Panc1 (cell line): ENCODE measurements at regions of chr1 and their contacts with region 1.

Region 1: GRCh38 chr1:2194898-2195673 is 514 bp upstream of the FAAP20 start:
- DNase-seq: no peak
- ATAC-seq: peak; percentile 84
- H3K4me3 ChIP-seq: peak overlapping the region; percentile 63
- H3K27ac ChIP-seq: peak overlapping the region; percentile 91
- H3K4me1 ChIP-seq: peaks cover 44% of the 10 kb centered on the region
- H3K27me3 ChIP-seq: no peaks in the 10 kb centered on the region
- CTCF ChIP-seq: peak; percentile 97

Region 2: DNA sequence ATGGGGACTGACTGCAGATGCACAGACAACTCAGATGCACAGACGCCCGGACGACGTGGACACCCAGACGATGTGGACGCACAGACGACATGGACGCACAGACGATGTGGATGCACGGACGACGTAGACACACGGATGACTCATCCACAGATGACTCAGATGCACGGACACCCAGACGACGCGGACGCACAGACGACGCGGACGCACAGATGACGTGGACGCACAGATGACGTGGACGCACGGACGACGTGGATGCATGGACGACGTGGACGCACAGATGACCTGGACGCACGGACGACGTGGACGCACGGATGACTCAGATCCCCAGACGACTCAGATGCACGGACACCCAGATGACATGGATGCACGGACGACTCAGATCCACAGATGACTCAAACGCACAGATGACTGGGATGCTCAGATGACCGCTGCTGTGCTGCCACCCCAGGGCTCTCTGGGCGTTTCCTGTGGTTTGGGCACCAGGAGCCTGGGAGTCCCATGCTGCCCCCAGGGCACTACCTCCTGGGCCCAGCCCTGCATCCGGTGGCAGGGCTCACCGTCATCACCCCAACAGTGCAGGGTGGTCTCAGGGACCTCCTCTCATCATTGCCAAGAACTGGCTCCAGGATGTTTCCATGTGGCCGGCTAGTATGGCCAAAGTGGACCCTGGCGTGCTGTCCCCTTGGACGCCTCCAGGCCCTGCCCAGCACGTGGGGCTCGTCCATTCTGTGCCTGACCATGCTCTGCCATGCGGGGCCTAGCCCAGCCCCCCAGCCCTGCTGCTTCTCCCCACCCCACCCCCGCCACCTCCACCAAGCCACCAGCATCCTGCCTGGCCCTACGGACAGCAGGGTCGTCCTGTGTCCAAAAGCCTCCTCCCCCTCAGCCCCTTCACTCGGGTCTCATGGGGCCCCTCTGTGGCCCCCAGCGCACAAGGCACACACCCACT is 14.5 kb before region 1 on chr1:
- CTCF ChIA-PET with region 1: no interaction called
- POLR2A ChIA-PET with region 1: no interaction called
- in situ Hi-C with region 1: no loop called
- intact Hi-C with region 1: no loop called
- DNase-seq: no peak
- ATAC-seq: no peak
- H3K4me3 ChIP-seq: no peak overlapping the region
- H3K27ac ChIP-seq: no peak overlapping the region
- H3K4me1 ChIP-seq: no peaks in the 10 kb centered on the region
- H3K27me3 ChIP-seq: no peaks in the 10 kb centered on the region
- CTCF ChIP-seq: no peak

Region 3: GRCh38 chr1:2212542-2213491 is 17.7 kb after region 1 on chr1:
- CTCF ChIA-PET with region 1: interaction called, 11 read pairs
- POLR2A ChIA-PET with region 1: interaction called, 14 read pairs
- in situ Hi-C with region 1: no loop called
- intact Hi-C with region 1: no loop called
- DNase-seq: no peak
- ATAC-seq: peak; percentile 26
- H3K4me3 ChIP-seq: peak overlapping the region; percentile 7 to 29; a peak in 3 of 4 replicates
- H3K27ac ChIP-seq: peak overlapping the region; percentile 82
- H3K4me1 ChIP-seq: peaks cover 53% of the 10 kb centered on the region
- H3K27me3 ChIP-seq: no peaks in the 10 kb centered on the region
- CTCF ChIP-seq: no peak; the same call in 1 of the 2 replicates

Region 4: GRCh38 chr1:2227346-2228153 is 32.5 kb after region 1 on chr1:
- CTCF ChIA-PET with region 1: interaction called, 10 read pairs
- POLR2A ChIA-PET with region 1: interaction called, 3 read pairs
- in situ Hi-C with region 1: no loop called
- intact Hi-C with region 1: no loop called
- DNase-seq: no peak
- ATAC-seq: peak; percentile 86
- H3K4me3 ChIP-seq: peak overlapping the region; percentile 58 to 61
- H3K27ac ChIP-seq: peak overlapping the region; percentile 71
- H3K4me1 ChIP-seq: peaks cover 12% of the 10 kb centered on the region
- H3K27me3 ChIP-seq: no peaks in the 10 kb centered on the region
- CTCF ChIP-seq: no peak

Region 5: GRCh38 chr1:2255420-2256369 is 60.6 kb after region 1 on chr1:
- CTCF ChIA-PET with region 1: no interaction called
- POLR2A ChIA-PET with region 1: no interaction called
- in situ Hi-C with region 1: no loop called
- intact Hi-C with region 1: no loop called
- DNase-seq: peak; percentile 82
- ATAC-seq: peak; percentile 77
- H3K4me3 ChIP-seq: no peak overlapping the region
- H3K27ac ChIP-seq: peak overlapping the region; percentile 44
- H3K4me1 ChIP-seq: peaks cover 13% of the 10 kb centered on the region
- H3K27me3 ChIP-seq: no peaks in the 10 kb centered on the region
- CTCF ChIP-seq: no peak

Region 6: GRCh38 chr1:2314803-2315673 is 120.0 kb after region 1 on chr1:
- CTCF ChIA-PET with region 1: interaction called, 6 read pairs
- POLR2A ChIA-PET with region 1: interaction called, 3 read pairs
- in situ Hi-C with region 1: no loop called
- intact Hi-C with region 1: loop called (anchors 10 kb)
- DNase-seq: no peak
- ATAC-seq: peak; percentile 44
- H3K4me3 ChIP-seq: peak overlapping the region; percentile 42 to 50
- H3K27ac ChIP-seq: peak overlapping the region; percentile 73; the same call in 1 of the 2 replicates
- H3K4me1 ChIP-seq: peaks cover 61% of the 10 kb centered on the region
- H3K27me3 ChIP-seq: no peaks in the 10 kb centered on the region
- CTCF ChIP-seq: peak; percentile 97

Region 7: DNA sequence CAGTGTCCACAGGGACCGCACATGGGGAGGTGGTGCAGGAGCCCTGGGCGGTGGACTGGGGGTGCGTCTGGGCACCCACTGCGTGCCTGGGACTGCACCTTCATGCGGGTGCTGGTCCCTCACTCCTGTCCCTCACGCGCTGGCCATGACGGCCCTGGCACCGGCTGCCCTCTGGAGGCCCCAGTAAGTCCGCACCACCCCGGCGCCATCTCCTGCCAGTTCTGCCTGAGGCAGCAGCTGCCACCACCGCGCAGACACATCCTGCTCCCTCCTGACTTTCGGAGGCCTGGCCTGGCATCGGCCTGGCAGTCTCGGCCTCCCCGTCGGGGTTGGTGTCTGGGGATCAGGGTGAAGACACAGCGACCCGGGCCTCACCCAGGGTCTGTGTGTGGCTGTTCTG is 131.4 kb after region 1 on chr1:
- CTCF ChIA-PET with region 1: no interaction called
- POLR2A ChIA-PET with region 1: no interaction called
- in situ Hi-C with region 1: no loop called
- intact Hi-C with region 1: no loop called
- DNase-seq: no peak
- ATAC-seq: no peak
- H3K4me3 ChIP-seq: no peak overlapping the region
- H3K27ac ChIP-seq: no peak overlapping the region
- H3K4me1 ChIP-seq: no peaks in the 10 kb centered on the region
- H3K27me3 ChIP-seq: no peaks in the 10 kb centered on the region
- CTCF ChIP-seq: no peak

Region 8: GRCh38 chr1:2381741-2382620 is 186.9 kb after region 1 on chr1:
- CTCF ChIA-PET with region 1: interaction called, 38 read pairs
- POLR2A ChIA-PET with region 1: interaction called, 6 read pairs
- in situ Hi-C with region 1: no loop called
- intact Hi-C with region 1: loop called (anchors 2 kb)
- DNase-seq: peak; percentile 30
- ATAC-seq: peak; percentile 90
- H3K4me3 ChIP-seq: no peak overlapping the region
- H3K27ac ChIP-seq: no peak overlapping the region
- H3K4me1 ChIP-seq: peaks cover 5% of the 10 kb centered on the region; the same call in 1 of the 2 replicates
- H3K27me3 ChIP-seq: no peaks in the 10 kb centered on the region
- CTCF ChIP-seq: peak; percentile 96

Region 9: GRCh38 chr1:2391041-2391930 is 196.2 kb after region 1 on chr1 and contains the starts of genes MORN1 and RER1:
- CTCF ChIA-PET with region 1: interaction called, 6 read pairs
- POLR2A ChIA-PET with region 1: interaction called, 5 read pairs
- in situ Hi-C with region 1: loop called (anchors 10 kb)
- intact Hi-C with region 1: no loop called
- DNase-seq: peak; percentile 93
- ATAC-seq: peak; percentile 98
- H3K4me3 ChIP-seq: peak within 1 kb of the TSS; percentile 69 to 99
- H3K27ac ChIP-seq: peak within 1 kb of the TSS; percentile 94
- H3K4me1 ChIP-seq: peaks cover 26% of the 10 kb centered on the region
- H3K27me3 ChIP-seq: no peaks in the 10 kb centered on the region
- CTCF ChIP-seq: no peak
- total RNA-seq, gene MORN1: 21.3 TPM
- total RNA-seq, gene RER1: 235 TPM

Region 10: GRCh38 chr1:2399890-2400575 is 204.9 kb after region 1 on chr1:
- CTCF ChIA-PET with region 1: no interaction called
- POLR2A ChIA-PET with region 1: interaction called, 13 read pairs
- in situ Hi-C with region 1: loop called (anchors 10 kb)
- intact Hi-C with region 1: no loop called
- DNase-seq: no peak
- ATAC-seq: no peak; the same call in 1 of the 2 replicates
- H3K4me3 ChIP-seq: no peak overlapping the region
- H3K27ac ChIP-seq: no peak overlapping the region
- H3K4me1 ChIP-seq: peaks cover 15% of the 10 kb centered on the region
- H3K27me3 ChIP-seq: no peaks in the 10 kb centered on the region
- CTCF ChIP-seq: no peak